Natural killer cell (primary cell): ENCODE measurements at regions of chr6 and their contacts with region 1.

Region 1: DNA sequence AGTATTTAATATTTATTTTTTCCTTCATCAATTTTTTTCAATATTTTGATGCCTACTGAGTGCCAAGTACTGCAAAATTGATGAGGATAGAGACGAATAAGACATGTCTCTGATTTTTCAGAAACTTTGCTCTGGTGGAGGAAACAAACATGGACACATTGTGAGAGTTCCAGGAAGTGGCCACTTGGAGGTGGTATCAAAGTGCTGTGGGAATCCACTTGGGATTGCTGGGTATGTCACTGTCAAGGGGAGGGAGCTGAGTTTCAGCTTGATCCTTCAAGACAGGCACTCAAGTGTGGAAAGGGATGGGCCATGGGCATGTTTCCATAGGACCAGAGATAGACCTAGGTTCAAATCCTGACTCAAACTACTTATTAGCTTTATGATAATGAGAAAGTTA is 24.5 kb upstream of the ABCC10 start:
- DNase-seq: no peak
- ATAC-seq: no peak
- H3K4me3 ChIP-seq: no peak overlapping the region
- H3K4me3 Mint-ChIP-seq: no peak overlapping the region
- H3K27ac ChIP-seq: no peak overlapping the region
- H3K27ac Mint-ChIP-seq: no peak overlapping the region
- H3K4me1 ChIP-seq: no peaks in the 10 kb centered on the region
- H3K4me1 Mint-ChIP-seq: peaks cover 1 to 3% of the 10 kb centered on the region in 2 donors
- H3K27me3 ChIP-seq: no peaks in the 10 kb centered on the region
- H3K27me3 Mint-ChIP-seq: peaks cover 22 to 48% of the 10 kb centered on the region in 2 donors
- CTCF ChIP-seq: no peak

Region 2: GRCh38 chr6:43263314-43264178 is 139.3 kb before region 1 on chr6:
- intact Hi-C with region 1: loop called (anchors 1 kb)
- DNase-seq: peak; percentile 65 to 86
- ATAC-seq: peak; percentile 76 to 99 (median 97)
- H3K4me3 ChIP-seq: no peak overlapping the region
- H3K4me3 Mint-ChIP-seq: no peak overlapping the region
- H3K27ac ChIP-seq: no peak overlapping the region
- H3K27ac Mint-ChIP-seq: no peak overlapping the region
- H3K4me1 ChIP-seq: no peaks in the 10 kb centered on the region
- H3K4me1 Mint-ChIP-seq: peaks cover 0 to 6% of the 10 kb centered on the region in 2 donors
- H3K27me3 ChIP-seq: peaks cover 3% of the 10 kb centered on the region
- H3K27me3 Mint-ChIP-seq: peaks cover 0 to 11% of the 10 kb centered on the region in 2 donors
- CTCF ChIP-seq: peak; percentile 65

Region 3: GRCh38 chr6:43308101-43308989 is 94.5 kb before region 1 on chr6 and contains the start of gene CRIP3:
- intact Hi-C with region 1: loop called (anchors 1 kb)
- DNase-seq: peak; percentile 33 to 72
- ATAC-seq: peak; percentile 67 to 91 (median 86)
- H3K4me3 ChIP-seq: peak within 1 kb of the TSS; percentile 26
- H3K4me3 Mint-ChIP-seq: peak within 1 kb of the TSS; percentile 75
- H3K27ac ChIP-seq: no peak within 1 kb of the TSS
- H3K27ac Mint-ChIP-seq: peak within 1 kb of the TSS in 1 of 2 donors; percentile 52
- H3K4me1 ChIP-seq: peaks cover 13% of the 10 kb centered on the region
- H3K4me1 Mint-ChIP-seq: peaks cover 0 to 9% of the 10 kb centered on the region in 2 donors
- H3K27me3 ChIP-seq: no peaks in the 10 kb centered on the region
- H3K27me3 Mint-ChIP-seq: peaks cover 3 to 9% of the 10 kb centered on the region in 2 donors
- CTCF ChIP-seq: peak; percentile 36
- total RNA-seq, gene CRIP3: 3.6 to 5.3 (median 4.3) TPM

Region 4: GRCh38 chr6:43361269-43361668 is 41.6 kb before region 1 on chr6:
- intact Hi-C with region 1: loop called (anchors 1 kb)
- DNase-seq: peak in 1 of 2 donors; percentile 21
- ATAC-seq: peak in 2 of 3 donors; percentile 50 to 59
- H3K4me3 ChIP-seq: no peak overlapping the region
- H3K4me3 Mint-ChIP-seq: no peak overlapping the region
- H3K27ac ChIP-seq: no peak overlapping the region
- H3K27ac Mint-ChIP-seq: no peak overlapping the region
- H3K4me1 ChIP-seq: peaks cover 6% of the 10 kb centered on the region
- H3K4me1 Mint-ChIP-seq: peaks cover 24 to 35% of the 10 kb centered on the region in 2 donors
- H3K27me3 ChIP-seq: no peaks in the 10 kb centered on the region
- H3K27me3 Mint-ChIP-seq: no peaks in the 10 kb centered on the region
- CTCF ChIP-seq: peak; percentile 32

Region 5: DNA sequence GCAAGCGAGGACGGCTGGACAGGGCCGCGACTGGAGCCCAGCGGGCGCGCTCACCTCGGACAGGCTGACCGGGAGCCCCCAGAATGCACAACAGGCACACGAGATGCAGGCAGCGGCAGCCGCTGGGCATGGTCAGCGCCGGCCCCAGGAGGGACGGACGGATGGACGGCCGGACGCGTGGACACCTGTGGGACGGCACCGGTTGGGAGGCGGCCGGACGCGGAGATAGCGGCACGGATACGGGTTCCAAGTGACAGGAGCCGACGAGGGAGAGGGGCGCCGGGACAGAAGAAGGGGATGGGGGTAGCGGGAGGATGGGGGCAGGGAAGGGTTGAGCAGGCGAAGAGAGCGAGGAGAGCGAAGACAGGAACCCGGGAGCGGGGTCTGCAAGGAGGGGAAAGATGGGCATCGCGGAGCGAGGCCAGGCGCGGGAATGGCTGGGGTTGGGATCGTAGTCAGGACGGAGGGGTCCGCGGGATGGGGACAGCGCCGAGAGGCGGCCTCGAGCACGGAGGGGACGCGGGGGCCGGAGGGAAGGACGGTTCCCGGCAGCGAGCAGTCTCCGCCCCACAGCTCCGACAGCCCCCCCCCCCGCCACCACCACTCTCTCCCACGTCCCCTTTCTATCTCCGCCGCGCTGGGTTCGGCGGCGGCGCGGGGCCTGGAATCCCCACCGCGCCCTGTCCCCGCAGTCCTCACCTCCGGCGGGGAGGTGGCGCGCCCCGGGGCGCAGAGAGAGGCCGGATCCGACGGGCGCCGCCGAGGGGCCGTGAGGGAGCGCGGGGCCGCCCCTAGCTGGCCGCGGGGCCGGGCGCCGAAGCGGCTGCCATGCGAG is 52.1 kb after region 1 on chr6:
- intact Hi-C with region 1: no loop called
- DNase-seq: peak; percentile 31 to 66
- ATAC-seq: peak; percentile 49 to 68 (median 65)
- H3K4me3 ChIP-seq: peak overlapping the region; percentile 46
- H3K4me3 Mint-ChIP-seq: peak overlapping the region; percentile 91
- H3K27ac ChIP-seq: no peak overlapping the region
- H3K27ac Mint-ChIP-seq: peak overlapping the region; percentile 54 to 78
- H3K4me1 ChIP-seq: peaks cover 16% of the 10 kb centered on the region
- H3K4me1 Mint-ChIP-seq: peaks cover 16 to 25% of the 10 kb centered on the region in 2 donors
- H3K27me3 ChIP-seq: peaks cover 2% of the 10 kb centered on the region
- H3K27me3 Mint-ChIP-seq: peaks cover 7 to 8% of the 10 kb centered on the region in 2 donors
- CTCF ChIP-seq: peak; percentile 89